Esophagus muscularis mucosa (tissue), 4 donors: ENCODE measurements at regions of chr1 and their contacts with region 1.

Region 1: DNA sequence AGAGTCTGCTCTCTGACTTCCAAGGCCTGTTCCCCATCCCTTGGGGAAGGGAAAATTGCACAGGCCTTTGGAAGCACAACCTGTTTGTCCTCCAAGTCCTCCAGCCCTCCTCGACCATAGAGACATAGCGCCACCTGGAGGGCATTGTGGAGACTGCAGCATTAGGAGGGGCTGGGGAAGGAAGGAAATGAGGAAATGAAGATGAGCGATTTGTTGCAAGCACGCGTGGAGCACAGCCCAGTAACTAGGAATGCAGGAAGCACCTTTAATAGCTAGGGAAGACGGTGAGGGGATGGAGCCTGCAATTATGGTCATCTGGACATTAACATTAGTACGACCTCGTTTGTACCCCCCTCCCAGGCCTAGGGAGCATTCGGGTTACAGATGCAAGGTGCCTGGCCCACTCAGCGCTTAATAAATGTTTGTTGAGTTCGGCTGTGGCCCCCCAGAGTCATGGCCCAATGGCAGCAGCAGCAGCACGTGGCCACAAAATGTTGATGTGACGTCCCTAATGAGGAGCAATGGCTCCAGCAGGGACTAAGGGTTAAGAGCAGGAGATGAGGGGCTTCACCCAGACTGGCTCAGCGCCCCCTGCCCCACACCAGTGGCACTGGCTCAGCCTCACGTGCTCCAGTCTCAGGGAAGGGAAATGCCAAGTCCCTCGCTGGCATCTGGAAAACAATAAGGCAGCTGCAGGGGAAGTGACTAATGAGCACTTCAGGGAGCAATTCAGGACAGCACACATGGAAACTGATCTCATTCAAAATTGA is 8.0 kb upstream of the CAMK2N1 start:
- DNase-seq: peak; percentile 97
- H3K4me3 ChIP-seq: no peak overlapping the region
- H3K27ac ChIP-seq: peak overlapping the region in 3 of 4 donors; percentile 21 to 40 (median 31)
- H3K4me1 ChIP-seq: peaks cover 11 to 23% (median 20%) of the 10 kb centered on the region in 4 donors
- H3K27me3 ChIP-seq: no peaks in the 10 kb centered on the region
- CTCF ChIP-seq: peak; percentile 96 to 99 (median 99)
- EP300 ChIP-seq: no peak
- POLR2A ChIP-seq: no peak

Region 2: GRCh38 chr1:19918057-19918456 is 576.0 kb before region 1 on chr1:
- intact Hi-C with region 1: loop called (anchors 5 kb)
- DNase-seq: no peak
- H3K4me3 ChIP-seq: no peak overlapping the region
- H3K27ac ChIP-seq: no peak overlapping the region
- H3K4me1 ChIP-seq: peaks cover 0 to 6% (median 2%) of the 10 kb centered on the region in 4 donors
- H3K27me3 ChIP-seq: peaks cover 0 to 3% (median 0%) of the 10 kb centered on the region in 4 donors
- CTCF ChIP-seq: peak; percentile 88 to 89 (median 88)
- EP300 ChIP-seq: no peak
- POLR2A ChIP-seq: no peak

Region 3: GRCh38 chr1:20212685-20213331 is 281.2 kb before region 1 on chr1:
- intact Hi-C with region 1: loop called (anchors 1 kb)
- DNase-seq: no peak
- H3K4me3 ChIP-seq: no peak overlapping the region
- H3K27ac ChIP-seq: no peak overlapping the region
- H3K4me1 ChIP-seq: peaks cover 0 to 16% (median 12%) of the 10 kb centered on the region in 4 donors
- H3K27me3 ChIP-seq: peaks cover 0 to 7% (median 0%) of the 10 kb centered on the region in 4 donors
- CTCF ChIP-seq: peak; percentile 65 to 84 (median 80)
- EP300 ChIP-seq: no peak
- POLR2A ChIP-seq: no peak

Region 4: DNA sequence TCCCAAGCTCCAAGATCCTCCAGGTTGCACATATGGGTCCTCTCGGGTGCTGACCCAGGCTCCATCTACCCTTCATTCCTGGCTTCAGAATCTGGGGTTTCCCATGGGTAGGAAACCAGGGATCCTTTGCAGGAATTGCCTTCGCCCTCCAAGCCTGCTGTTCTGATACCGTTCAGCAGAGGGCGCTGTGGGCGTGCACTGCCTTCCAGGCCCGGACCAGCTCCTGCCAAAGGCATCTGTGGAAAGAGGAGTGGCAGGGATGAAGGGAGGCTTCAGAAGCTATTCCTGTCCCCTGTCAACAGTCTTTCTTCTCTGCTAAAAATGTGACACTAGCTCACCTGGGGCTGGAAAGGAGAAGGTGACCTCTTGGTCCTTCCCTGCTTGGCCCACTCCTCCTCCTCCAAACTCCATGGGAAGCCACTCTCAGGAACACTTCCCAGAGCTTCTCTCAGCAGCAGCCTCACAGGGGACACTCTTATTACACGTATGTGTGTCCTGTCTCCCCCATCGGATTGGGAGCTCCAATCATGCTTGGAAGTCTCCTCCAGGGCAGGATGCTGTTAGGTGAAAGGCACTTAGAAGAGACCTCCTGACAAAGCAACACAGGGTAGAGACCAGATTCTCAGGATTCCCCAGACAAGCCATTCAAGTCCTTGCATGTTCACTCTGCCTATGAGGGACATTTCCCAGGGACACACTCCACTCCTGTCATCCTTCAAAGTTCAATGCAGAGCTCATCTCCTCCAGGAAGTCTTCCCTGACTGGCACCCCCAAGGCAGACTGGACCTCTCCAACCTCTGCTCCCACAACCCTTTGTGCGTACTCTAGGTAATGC is 132.0 kb before region 1 on chr1:
- intact Hi-C with region 1: loop called (anchors 5 kb)
- DNase-seq: no peak
- H3K4me3 ChIP-seq: no peak overlapping the region
- H3K27ac ChIP-seq: no peak overlapping the region
- H3K4me1 ChIP-seq: peaks cover 27 to 35% (median 31%) of the 10 kb centered on the region in 4 donors
- H3K27me3 ChIP-seq: peaks cover 0 to 73% (median 16%) of the 10 kb centered on the region in 4 donors
- CTCF ChIP-seq: peak; percentile 40 to 60 (median 50)
- EP300 ChIP-seq: no peak
- POLR2A ChIP-seq: no peak

Region 5: GRCh38 chr1:20376880-20377494 is 117.0 kb before region 1 on chr1:
- intact Hi-C with region 1: loop called (anchors 1 kb)
- DNase-seq: no peak
- H3K4me3 ChIP-seq: no peak overlapping the region
- H3K27ac ChIP-seq: no peak overlapping the region
- H3K4me1 ChIP-seq: no peaks in the 10 kb centered on the region
- H3K27me3 ChIP-seq: peaks cover 0 to 71% (median 0%) of the 10 kb centered on the region in 4 donors
- CTCF ChIP-seq: peak; percentile 59 to 87 (median 59)
- EP300 ChIP-seq: no peak
- POLR2A ChIP-seq: no peak